ENCODE measurements at regions of chr10 and their contacts with region 1.

Region 1: GRCh38 chr10:119588071-119588470 is 8.7 kb downstream of the TIAL1 start:
- DNase-seq: no peak
- ATAC-seq: no peak

Region 2: GRCh38 chr10:119178372-119179119 is 409.5 kb before region 1 on chr10 and contains the start of gene PRDX3:
- intact Hi-C with region 1: loop called (anchors 10 kb)
- DNase-seq: peak; percentile 98
- ATAC-seq: peak; percentile 99
- total RNA-seq, gene PRDX3: 285 TPM

Region 3: DNA sequence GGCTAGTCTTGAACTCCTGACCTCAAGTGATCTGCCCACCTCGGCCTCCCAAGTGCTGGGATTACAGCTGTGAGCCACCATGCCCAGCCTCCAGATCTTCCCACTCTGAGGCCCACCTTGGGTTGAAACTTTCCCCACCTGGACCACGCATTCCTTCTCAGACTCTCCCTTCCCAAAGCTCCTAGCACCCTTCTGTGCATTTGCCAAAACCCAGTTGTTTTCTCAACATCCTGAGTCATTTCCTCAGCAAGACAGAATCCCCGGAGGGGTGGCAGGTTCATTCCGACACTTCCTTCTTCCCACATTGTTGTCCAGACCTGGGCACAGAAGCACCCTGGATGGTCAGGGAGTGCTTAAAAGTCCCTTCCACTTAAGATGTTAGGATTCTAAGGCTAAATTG is 92.0 kb after region 1 on chr10:
- intact Hi-C with region 1: no loop called
- DNase-seq: no peak
- ATAC-seq: no peak

Measured in Right ventricle myocardium inferior (tissue), 1 donor.